Upper lobe of right lung (tissue), 1 donor: ENCODE measurements at regions of chr9 and their contacts with region 1.

Region 1: DNA sequence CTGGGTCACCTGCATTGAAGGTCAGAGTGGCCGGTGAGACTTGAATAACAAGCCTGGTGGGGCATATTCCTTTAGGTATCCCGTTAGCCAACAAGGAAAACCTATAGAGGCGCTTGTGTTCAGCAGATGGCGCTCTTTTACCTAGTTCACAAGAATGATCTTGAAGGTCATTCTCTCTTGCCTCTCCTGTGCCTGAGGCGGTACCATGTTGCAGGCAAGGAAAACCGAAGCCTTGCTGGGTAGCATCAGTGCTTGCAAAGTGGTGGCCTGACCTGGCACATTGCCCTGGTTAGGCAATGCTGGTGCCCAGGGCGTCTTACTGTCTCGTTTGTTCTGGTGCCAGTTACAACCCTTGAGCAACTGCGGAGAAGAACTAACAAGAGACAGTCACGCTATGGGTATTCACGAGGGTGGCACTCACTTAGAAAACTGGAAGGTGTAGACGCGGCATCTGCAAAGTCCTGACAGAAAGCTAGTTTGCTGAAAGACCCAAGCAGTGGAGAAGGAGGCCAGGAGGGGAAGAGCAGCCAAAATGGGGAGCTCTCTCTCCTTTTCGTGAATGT is 56.7 kb downstream of the AOPEP start:
- DNase-seq: peak; percentile 91
- ATAC-seq: peak; percentile 98
- H3K4me3 ChIP-seq: no peak overlapping the region
- H3K27ac ChIP-seq: no peak overlapping the region
- H3K4me1 ChIP-seq: peaks cover 7% of the 10 kb centered on the region
- H3K27me3 ChIP-seq: no peaks in the 10 kb centered on the region
- CTCF ChIP-seq: peak; percentile 73

Region 2: DNA sequence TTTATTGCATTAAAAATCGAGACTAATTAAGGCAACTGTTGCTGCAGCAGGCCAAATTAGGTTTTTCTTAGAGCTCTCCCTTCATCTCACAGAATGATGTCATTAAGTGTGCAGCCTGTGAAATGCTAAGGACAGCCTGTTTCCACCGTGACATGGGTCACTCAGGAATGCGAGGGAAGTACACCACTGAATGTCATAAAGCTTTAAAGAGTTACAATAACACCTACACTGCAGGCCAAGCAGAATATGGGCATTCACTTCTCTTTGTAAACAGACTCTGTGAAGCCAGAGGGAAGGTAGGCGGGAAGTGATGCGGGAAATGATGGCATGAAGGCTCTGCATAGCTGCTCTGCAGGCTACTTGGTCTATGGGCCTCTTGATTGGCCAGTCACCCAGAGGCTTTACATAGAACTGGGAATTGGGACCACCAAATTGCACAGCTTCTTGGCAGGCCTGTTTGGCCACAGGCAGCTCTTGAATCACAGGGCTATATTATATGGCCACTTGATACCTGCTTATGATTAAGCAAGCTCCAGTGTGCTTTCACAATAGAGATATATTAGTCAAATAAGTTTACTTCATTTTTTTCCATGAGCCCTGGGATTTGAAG is 85.1 kb before region 1 on chr9:
- intact Hi-C with region 1: no loop called
- DNase-seq: no peak
- ATAC-seq: peak; percentile 92
- H3K4me3 ChIP-seq: no peak overlapping the region
- H3K27ac ChIP-seq: peak overlapping the region; percentile 7
- H3K4me1 ChIP-seq: no peaks in the 10 kb centered on the region
- H3K27me3 ChIP-seq: no peaks in the 10 kb centered on the region
- CTCF ChIP-seq: no peak

Region 3: DNA sequence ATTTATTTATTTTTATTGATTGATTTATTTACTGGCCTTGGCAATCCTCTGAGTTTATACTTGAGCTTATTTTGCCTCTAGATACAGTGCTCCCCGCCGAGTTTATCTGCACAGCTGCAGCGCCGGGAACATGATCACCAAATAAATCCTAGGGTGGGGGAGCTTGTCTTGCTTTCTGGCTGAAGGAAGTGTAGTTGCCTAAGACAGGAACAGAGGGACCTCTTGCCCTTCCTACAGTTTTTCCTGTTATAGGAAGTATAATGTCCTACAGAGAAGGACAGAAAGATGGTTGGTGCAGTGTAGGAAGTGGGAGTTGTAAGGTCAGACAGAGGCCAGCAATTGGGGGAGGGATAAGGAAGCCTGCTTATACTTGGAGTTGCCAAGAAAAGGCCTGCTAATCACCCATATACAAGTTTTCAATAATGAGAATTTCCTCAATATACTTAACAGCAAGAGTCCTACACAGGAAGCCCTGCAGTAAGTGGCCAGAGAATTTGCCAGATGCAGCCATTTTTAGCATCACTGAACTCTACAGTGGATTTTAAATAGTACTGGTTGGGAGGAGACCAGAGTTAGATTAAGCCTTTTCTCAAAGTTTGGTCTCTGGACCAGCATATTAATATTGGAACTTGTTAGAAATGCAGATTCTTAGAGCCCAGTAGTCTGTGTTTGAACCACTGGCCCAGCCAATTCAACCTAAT is 49.0 kb before region 1 on chr9:
- intact Hi-C with region 1: no loop called
- DNase-seq: no peak
- ATAC-seq: peak; percentile 74
- H3K4me3 ChIP-seq: no peak overlapping the region
- H3K27ac ChIP-seq: no peak overlapping the region
- H3K4me1 ChIP-seq: peaks cover 4% of the 10 kb centered on the region
- H3K27me3 ChIP-seq: no peaks in the 10 kb centered on the region
- CTCF ChIP-seq: no peak

Region 4: GRCh38 chr9:94928691-94929372 is 145.6 kb after region 1 on chr9:
- intact Hi-C with region 1: no loop called
- DNase-seq: no peak
- ATAC-seq: no peak
- H3K4me3 ChIP-seq: no peak overlapping the region
- H3K27ac ChIP-seq: peak overlapping the region; percentile 65
- H3K4me1 ChIP-seq: peaks cover 10% of the 10 kb centered on the region
- H3K27me3 ChIP-seq: no peaks in the 10 kb centered on the region
- CTCF ChIP-seq: no peak

Region 5: GRCh38 chr9:95127249-95128176 is 344.3 kb after region 1 on chr9:
- intact Hi-C with region 1: loop called (anchors 10 kb)
- DNase-seq: peak; percentile 90
- ATAC-seq: peak; percentile 94
- H3K4me3 ChIP-seq: peak overlapping the region; percentile 24
- H3K27ac ChIP-seq: no peak overlapping the region
- H3K4me1 ChIP-seq: peaks cover 15% of the 10 kb centered on the region
- H3K27me3 ChIP-seq: no peaks in the 10 kb centered on the region
- CTCF ChIP-seq: peak; percentile 98